ENCODE measurements at regions of chr2 and their contacts with region 1.

Region 1: GRCh38 chr2:145744541-145745386 is 1224.8 kb upstream of the ZEB2 start:
- DNase-seq: no peak

Region 2: GRCh38 chr2:144198117-144198516 is 1546.6 kb before region 1 on chr2:
- intact Hi-C with region 1: no loop called
- DNase-seq: no peak

Region 3: GRCh38 chr2:144389151-144389929 is 1355.4 kb before region 1 on chr2:
- intact Hi-C with region 1: loop called in 1 of 2 experiments (anchors 10 kb)
- DNase-seq: no peak

Region 4: DNA sequence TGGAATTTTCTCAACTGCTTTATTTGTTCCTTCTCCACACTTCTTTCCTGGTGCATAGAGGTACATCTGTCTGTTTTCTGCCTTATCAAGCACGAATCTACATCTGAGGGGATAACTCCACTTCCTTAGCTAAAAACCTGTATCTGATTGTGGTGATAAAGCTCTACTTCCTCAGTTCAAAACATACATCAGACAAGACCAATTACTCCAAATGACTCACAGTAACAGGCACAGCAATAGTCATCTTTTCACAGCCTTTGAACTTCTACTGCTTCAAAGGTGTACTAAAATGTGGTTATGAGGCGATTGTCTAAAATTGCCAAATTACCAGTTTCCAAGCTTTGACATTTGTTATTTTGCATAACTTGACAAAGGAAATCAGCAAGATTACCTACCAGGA is 421.3 kb before region 1 on chr2:
- intact Hi-C with region 1: loop called in 1 of 2 experiments (anchors 2 kb)
- DNase-seq: no peak